Mammary epithelial cell (primary cell): ENCODE measurements at regions of chr2 and their contacts with region 1.

Region 1: GRCh38 chr2:109516445-109517117 is 97.2 kb downstream of the SEPTIN10 start:
- DNase-seq: no peak
- H3K4me3 ChIP-seq: no peak overlapping the region
- H3K27ac ChIP-seq: no peak overlapping the region
- H3K4me1 ChIP-seq: peaks cover 5% of the 10 kb centered on the region
- H3K27me3 ChIP-seq: no peaks in the 10 kb centered on the region
- CTCF ChIP-seq: peak; percentile 74 to 75

Region 2: DNA sequence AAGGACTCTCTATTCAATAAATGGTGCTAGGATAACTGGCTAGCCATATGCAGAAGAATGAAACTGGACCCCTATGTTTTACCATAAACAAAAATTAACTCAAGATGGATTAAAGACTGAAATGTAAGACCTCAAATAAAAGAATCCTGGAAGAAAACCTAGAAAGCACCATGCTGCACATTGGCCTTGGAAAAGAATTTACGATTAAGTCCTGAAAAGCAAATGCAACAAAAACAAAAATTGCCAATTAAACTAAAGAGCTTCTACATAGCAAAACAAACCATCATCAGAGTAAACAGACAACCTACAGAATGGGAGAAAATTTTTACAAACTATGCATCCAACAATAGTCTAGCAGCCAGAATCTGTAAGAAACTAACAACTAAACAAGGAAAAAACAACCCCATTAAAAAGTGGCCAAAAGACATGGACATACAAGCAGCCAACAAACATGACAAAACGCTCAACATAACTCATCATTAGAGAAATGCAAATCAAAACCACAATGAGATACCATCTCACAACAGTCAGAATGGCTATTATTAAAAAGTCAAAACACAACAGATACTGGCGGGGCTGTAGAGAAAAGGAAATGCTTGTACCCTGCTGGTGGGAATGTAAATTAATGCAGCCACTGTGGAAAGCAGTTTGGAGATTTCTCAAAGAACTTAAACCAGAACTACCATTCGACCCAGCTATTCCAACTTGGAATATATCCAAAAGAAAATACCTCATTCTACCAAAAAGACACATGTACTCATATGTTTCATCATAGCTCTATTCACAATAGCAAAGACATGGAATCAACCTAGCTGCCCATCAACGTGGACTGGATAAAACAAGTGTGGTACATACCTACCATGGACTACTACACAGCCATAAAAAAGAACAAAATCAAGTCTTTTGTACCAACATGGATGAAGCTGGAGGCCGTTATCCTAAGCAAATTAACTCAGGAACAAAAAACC is 66.6 kb after region 1 on chr2:
- CTCF ChIA-PET with region 1: no interaction called
- dilution Hi-C with region 1: no loop called
- in situ Hi-C with region 1: no loop called
- intact Hi-C with region 1: no loop called
- DNase-seq: peak; percentile 55
- H3K4me3 ChIP-seq: no peak overlapping the region
- H3K27ac ChIP-seq: no peak overlapping the region
- H3K4me1 ChIP-seq: no peaks in the 10 kb centered on the region
- H3K27me3 ChIP-seq: no peaks in the 10 kb centered on the region
- CTCF ChIP-seq: no peak

Region 3: GRCh38 chr2:109663721-109664120 is 147.1 kb after region 1 on chr2:
- CTCF ChIA-PET with region 1: interaction called, 3 read pairs
- dilution Hi-C with region 1: no loop called
- in situ Hi-C with region 1: no loop called
- intact Hi-C with region 1: loop called (anchors 1 kb)
- DNase-seq: peak; percentile 90
- H3K4me3 ChIP-seq: no peak overlapping the region
- H3K27ac ChIP-seq: no peak overlapping the region
- H3K4me1 ChIP-seq: peaks cover 9% of the 10 kb centered on the region
- H3K27me3 ChIP-seq: no peaks in the 10 kb centered on the region
- CTCF ChIP-seq: no peak

Region 4: GRCh38 chr2:109715313-109715805 is 198.8 kb after region 1 on chr2:
- CTCF ChIA-PET with region 1: no interaction called
- dilution Hi-C with region 1: no loop called
- in situ Hi-C with region 1: no loop called
- intact Hi-C with region 1: loop called (anchors 1 kb)
- DNase-seq: peak; percentile 51
- H3K4me3 ChIP-seq: no peak overlapping the region
- H3K27ac ChIP-seq: no peak overlapping the region
- H3K4me1 ChIP-seq: no peaks in the 10 kb centered on the region
- H3K27me3 ChIP-seq: no peaks in the 10 kb centered on the region
- CTCF ChIP-seq: peak; percentile 67 to 94

Region 5: GRCh38 chr2:109736177-109736827 is 219.7 kb after region 1 on chr2:
- CTCF ChIA-PET with region 1: no interaction called
- dilution Hi-C with region 1: no loop called
- in situ Hi-C with region 1: no loop called
- intact Hi-C with region 1: loop called (anchors 1 kb)
- DNase-seq: peak; percentile 36
- H3K4me3 ChIP-seq: no peak overlapping the region
- H3K27ac ChIP-seq: no peak overlapping the region
- H3K4me1 ChIP-seq: no peaks in the 10 kb centered on the region
- H3K27me3 ChIP-seq: no peaks in the 10 kb centered on the region
- CTCF ChIP-seq: peak; percentile 57 to 73